Panc1 (cell line): ENCODE measurements at regions of chr2 and their contacts with region 1.

Region 1: GRCh38 chr2:204260162-204260877 is 285.0 kb upstream of the PARD3B start:
- DNase-seq: peak; percentile 8
- ATAC-seq: peak; percentile 75
- H3K4me3 ChIP-seq: no peak overlapping the region
- H3K27ac ChIP-seq: no peak overlapping the region
- H3K4me1 ChIP-seq: no peaks in the 10 kb centered on the region
- H3K27me3 ChIP-seq: no peaks in the 10 kb centered on the region; the same call in 1 of the 2 replicates
- CTCF ChIP-seq: peak; percentile 81

Region 2: DNA sequence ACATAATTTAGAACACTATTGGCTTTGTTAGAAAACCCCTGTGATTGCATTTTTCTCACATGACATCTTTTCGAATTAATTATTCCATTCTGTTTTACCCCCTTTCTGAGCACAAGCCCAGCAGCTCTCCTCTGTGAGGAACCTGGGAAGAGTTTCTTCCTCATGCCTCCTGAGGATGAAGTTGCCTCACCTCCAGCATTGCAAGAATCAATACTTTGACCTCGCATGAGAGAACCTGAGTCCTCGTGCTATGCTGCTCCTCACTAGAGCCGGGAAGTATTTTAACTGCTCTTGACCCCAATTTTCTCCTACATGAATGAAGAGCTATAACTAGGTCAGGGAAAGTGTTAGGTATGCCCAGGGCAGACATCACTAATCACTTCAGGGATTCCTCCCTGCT is 648.1 kb before region 1 on chr2:
- CTCF ChIA-PET with region 1: interaction called, 12 read pairs
- POLR2A ChIA-PET with region 1: no interaction called
- in situ Hi-C with region 1: no loop called
- intact Hi-C with region 1: no loop called
- DNase-seq: no peak
- ATAC-seq: no peak
- H3K4me3 ChIP-seq: no peak overlapping the region
- H3K27ac ChIP-seq: no peak overlapping the region
- H3K4me1 ChIP-seq: no peaks in the 10 kb centered on the region
- H3K27me3 ChIP-seq: no peaks in the 10 kb centered on the region
- CTCF ChIP-seq: no peak

Region 3: DNA sequence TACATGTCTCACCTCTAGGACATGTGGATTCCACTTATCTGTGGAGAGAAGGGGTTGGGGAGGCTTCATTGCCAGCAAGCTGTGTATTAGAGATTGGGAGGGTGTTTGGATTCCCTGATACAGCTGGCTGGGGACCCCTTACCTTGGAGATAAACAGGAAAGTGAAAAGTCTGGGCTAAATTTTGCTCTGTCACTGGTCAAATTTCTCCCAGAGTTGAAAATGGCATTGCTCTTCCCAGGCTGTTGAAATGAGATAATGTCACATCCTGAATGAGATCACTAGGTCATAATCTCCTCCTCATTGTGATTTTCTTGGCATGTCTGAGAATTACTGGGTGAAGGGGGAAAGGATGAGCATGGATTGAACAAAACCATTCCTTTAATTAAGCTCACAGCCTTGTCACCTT is 19.9 kb after region 1 on chr2:
- CTCF ChIA-PET with region 1: no interaction called
- POLR2A ChIA-PET with region 1: interaction called, 14 read pairs
- in situ Hi-C with region 1: no loop called
- intact Hi-C with region 1: no loop called
- DNase-seq: no peak
- ATAC-seq: no peak
- H3K4me3 ChIP-seq: no peak overlapping the region
- H3K27ac ChIP-seq: no peak overlapping the region
- H3K4me1 ChIP-seq: no peaks in the 10 kb centered on the region
- H3K27me3 ChIP-seq: peaks cover 3% of the 10 kb centered on the region
- CTCF ChIP-seq: no peak